ENCODE measurements at regions of chr2 and their contacts with region 1.

Region 1: GRCh38 chr2:64675860-64676259 is 22.1 kb upstream of the SERTAD2 start:
- DNase-seq: no peak
- ATAC-seq: peak; percentile 72 to 89 (median 78)
- H3K4me3 ChIP-seq: no peak overlapping the region
- H3K27ac ChIP-seq: no peak overlapping the region
- H3K4me1 ChIP-seq: peaks cover 15% of the 10 kb centered on the region
- H3K27me3 ChIP-seq: no peaks in the 10 kb centered on the region
- CTCF ChIP-seq: no peak

Region 2: GRCh38 chr2:62787386-62787785 is 1888.5 kb before region 1 on chr2:
- intact Hi-C with region 1: no loop called
- DNase-seq: no peak
- ATAC-seq: peak in 3 of 4 donors; percentile 61 to 71 (median 63)
- H3K4me3 ChIP-seq: no peak overlapping the region
- H3K27ac ChIP-seq: no peak overlapping the region
- H3K4me1 ChIP-seq: no peaks in the 10 kb centered on the region
- H3K27me3 ChIP-seq: no peaks in the 10 kb centered on the region
- CTCF ChIP-seq: peak; percentile 27

Region 3: DNA sequence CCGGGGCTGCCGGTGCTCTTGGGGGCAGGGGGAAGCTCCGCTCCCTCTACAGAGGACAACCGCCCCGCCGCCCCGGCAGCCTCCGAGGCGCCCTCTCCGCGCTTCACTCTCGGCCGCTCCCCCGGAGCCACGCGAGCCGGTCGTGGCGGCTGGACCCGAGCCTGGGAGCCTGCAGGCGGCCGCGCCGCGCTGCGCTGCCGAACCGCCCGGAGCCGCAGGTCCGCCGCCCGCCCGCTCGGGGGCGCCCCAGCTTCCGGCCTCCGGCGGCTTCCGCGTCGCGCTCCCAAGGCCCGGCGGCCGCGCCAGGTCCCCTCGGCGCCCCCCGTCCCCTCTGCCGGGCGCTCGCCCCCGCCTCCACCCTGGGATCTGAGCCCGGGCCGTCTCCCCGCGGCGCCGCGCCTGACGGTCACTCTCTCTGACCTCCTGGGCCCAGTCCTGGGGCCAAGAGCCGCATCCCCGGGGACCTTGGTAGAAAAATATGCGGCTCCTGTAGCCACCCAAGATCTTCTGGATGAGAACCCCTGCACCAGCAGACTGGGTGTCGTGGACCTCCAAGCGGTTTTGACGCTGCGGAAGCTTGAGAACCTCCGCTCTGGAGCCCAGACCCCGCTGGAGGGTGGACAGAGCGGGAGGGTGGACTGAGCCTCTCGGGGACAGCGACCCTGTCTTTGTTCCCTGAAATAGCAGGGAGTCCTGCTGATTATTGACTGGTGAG is 66.5 kb before region 1 on chr2:
- intact Hi-C with region 1: no loop called
- DNase-seq: peak; percentile 66 to 86
- ATAC-seq: peak; percentile 80 to 87 (median 82)
- H3K4me3 ChIP-seq: peak overlapping the region; percentile 82
- H3K27ac ChIP-seq: peak overlapping the region; percentile 84
- H3K4me1 ChIP-seq: peaks cover 3% of the 10 kb centered on the region
- H3K27me3 ChIP-seq: no peaks in the 10 kb centered on the region
- CTCF ChIP-seq: peak; percentile 67

Region 4: DNA sequence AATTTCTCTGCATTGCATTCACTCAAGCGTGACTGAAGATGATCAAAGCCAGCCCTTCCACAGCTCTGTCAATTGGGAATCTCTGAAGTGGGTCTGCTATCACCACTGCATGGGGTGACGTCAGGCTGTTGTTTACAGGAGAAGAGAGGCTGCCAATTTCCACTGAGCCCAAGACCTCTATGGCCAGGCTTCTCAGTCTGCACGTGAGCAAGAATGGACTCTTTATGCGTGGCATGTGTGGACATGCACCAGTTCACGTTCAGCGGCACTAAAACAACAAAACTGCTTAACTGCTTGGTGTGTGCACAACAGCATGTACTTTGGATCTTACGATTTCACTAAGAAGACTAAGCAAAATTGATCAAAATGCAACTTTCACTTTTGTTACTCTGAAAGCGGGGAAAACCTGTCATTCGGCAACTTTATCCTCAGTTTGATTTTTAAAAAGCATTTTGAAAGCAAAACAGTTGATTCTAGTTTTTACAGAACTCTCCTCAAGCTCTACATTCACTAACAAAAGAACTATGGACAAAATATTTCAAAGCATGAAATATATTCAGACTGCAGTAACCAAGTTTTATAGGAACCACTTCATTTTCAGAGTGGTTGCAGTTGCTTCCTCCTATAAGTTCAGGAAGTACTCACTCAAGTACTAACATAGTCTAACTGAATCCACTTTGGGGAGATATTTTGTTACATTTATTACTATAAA is 54.8 kb after region 1 on chr2:
- intact Hi-C with region 1: loop called in 1 of 2 experiments (anchors 5 kb)
- DNase-seq: peak; percentile 30 to 51
- ATAC-seq: peak; percentile 68 to 86 (median 73)
- H3K4me3 ChIP-seq: peak overlapping the region; percentile 57
- H3K27ac ChIP-seq: peak overlapping the region; percentile 60
- H3K4me1 ChIP-seq: peaks cover 15% of the 10 kb centered on the region
- H3K27me3 ChIP-seq: no peaks in the 10 kb centered on the region
- CTCF ChIP-seq: no peak

Measured in psoas muscle (tissue), 8 donors.